ENCODE measurements at regions of chr3 and their contacts with region 1.

Region 1: GRCh38 chr3:50652709-50653108 is 22.0 kb upstream of the DOCK3 start:
- DNase-seq: peak; percentile 74
- ATAC-seq: peak; percentile 56
- H3K4me3 Mint-ChIP-seq: no peak overlapping the region
- H3K27ac Mint-ChIP-seq: peak overlapping the region; percentile 26
- H3K4me1 Mint-ChIP-seq: peaks cover 25% of the 10 kb centered on the region
- H3K27me3 Mint-ChIP-seq: no peaks in the 10 kb centered on the region
- CTCF ChIP-seq: peak; percentile 73

Region 2: GRCh38 chr3:50627407-50628051 is 25.2 kb before region 1 on chr3:
- CTCF ChIA-PET with region 1: interaction called, 47 read pairs
- POLR2A ChIA-PET with region 1: interaction called, 6 read pairs
- intact Hi-C with region 1: no loop called
- DNase-seq: peak; percentile 51
- ATAC-seq: peak; percentile 38
- H3K4me3 Mint-ChIP-seq: no peak overlapping the region
- H3K27ac Mint-ChIP-seq: peak overlapping the region; percentile 83
- H3K4me1 Mint-ChIP-seq: peaks cover 95% of the 10 kb centered on the region
- H3K27me3 Mint-ChIP-seq: no peaks in the 10 kb centered on the region
- CTCF ChIP-seq: peak; percentile 34

Region 3: GRCh38 chr3:50639055-50639494 is 13.6 kb before region 1 on chr3:
- CTCF ChIA-PET with region 1: interaction called, 47 read pairs
- POLR2A ChIA-PET with region 1: interaction called, 6 read pairs
- intact Hi-C with region 1: no loop called
- DNase-seq: no peak
- ATAC-seq: no peak
- H3K4me3 Mint-ChIP-seq: no peak overlapping the region
- H3K27ac Mint-ChIP-seq: peak overlapping the region; percentile 73
- H3K4me1 Mint-ChIP-seq: peaks cover 47% of the 10 kb centered on the region
- H3K27me3 Mint-ChIP-seq: no peaks in the 10 kb centered on the region
- CTCF ChIP-seq: no peak

Region 4: GRCh38 chr3:50674349-50675178 is 21.9 kb after region 1 on chr3 and contains the start of gene DOCK3:
- CTCF ChIA-PET with region 1: interaction called, 12 read pairs
- POLR2A ChIA-PET with region 1: interaction called, 5 read pairs
- intact Hi-C with region 1: no loop called
- DNase-seq: peak; percentile 58
- ATAC-seq: peak; percentile 85
- H3K4me3 Mint-ChIP-seq: peak within 1 kb of the TSS; percentile 75
- H3K27ac Mint-ChIP-seq: peak within 1 kb of the TSS; percentile 61
- H3K4me1 Mint-ChIP-seq: peaks cover 12% of the 10 kb centered on the region
- H3K27me3 Mint-ChIP-seq: peaks cover 28% of the 10 kb centered on the region
- CTCF ChIP-seq: no peak
- total RNA-seq, gene DOCK3: 3.6 to 4.2 TPM

Measured in activated CD8-positive, alpha-beta T cell treated with anti-CD3 and anti-CD28 coated beads for 36 hours (primary cell).